AG04450 (cell line): ENCODE measurements at regions of chr2 and their contacts with region 1.

Region 1: DNA sequence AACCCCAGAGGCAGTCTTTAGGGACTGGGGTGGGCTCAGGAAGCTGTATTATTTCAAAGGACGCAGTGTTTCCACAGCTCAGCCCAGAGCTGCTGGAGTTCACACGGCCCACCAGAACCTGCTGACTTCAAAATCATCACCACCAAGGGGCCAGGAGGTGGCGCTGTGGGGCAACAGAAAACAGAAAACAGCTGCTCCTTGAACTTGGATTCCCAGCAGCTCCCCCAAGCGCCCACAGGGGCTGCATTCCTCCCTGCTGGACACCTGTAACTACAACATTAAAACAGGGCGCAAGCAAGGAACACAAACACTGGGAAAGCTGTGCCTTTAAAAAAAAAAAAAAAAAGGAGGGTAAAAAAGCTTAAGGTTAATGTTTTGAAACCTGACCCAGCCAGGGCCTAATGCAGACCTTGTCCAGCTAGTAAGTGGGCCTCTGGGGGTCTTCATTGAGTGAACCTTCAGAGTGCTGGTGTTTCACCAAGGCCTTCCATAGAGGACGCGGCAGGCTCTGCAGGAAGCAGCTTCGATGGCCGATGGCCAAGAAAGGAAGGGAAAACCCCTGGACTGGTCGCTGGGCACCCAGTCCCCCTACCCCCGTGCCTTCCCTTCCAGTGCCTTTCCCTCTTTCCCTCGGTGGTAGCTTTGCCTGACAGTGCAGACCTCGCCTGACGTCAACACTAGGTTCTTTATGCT is 25.9 kb downstream of the MLPH start:
- DNase-seq: peak; percentile 71
- H3K4me3 ChIP-seq: no peak overlapping the region
- H3K27ac ChIP-seq: peak overlapping the region; percentile 31
- H3K27me3 ChIP-seq: no peaks in the 10 kb centered on the region
- CTCF ChIP-seq: peak; percentile 92

Region 2: DNA sequence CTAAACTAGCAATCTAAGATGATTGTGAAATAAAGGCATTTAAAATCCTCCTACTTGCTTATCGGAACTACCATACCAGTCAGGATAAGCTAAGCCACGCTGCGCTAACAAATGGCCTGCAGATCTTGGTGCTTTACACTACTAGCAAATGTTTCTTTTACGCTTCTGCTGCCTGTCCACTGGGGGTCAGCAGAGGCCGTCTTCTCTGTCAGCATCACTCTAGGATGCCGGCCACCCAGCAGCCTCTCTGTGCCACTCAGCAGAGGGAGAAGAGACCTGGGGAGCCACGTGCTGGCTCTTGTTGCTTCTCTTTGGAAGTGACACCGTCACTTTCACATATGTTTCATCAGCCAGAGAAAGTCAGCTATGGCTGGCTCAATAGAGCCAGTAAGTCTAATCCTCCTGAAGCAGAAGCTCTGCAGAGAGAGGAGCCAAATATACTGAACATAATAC is 390.7 kb before region 1 on chr2:
- CTCF ChIA-PET with region 1: interaction called, 30 read pairs
- POLR2A ChIA-PET with region 1: no interaction called
- DNase-seq: peak; percentile 54
- H3K4me3 ChIP-seq: no peak overlapping the region
- H3K27ac ChIP-seq: no peak overlapping the region
- H3K27me3 ChIP-seq: no peaks in the 10 kb centered on the region
- CTCF ChIP-seq: peak; percentile 74

Region 3: GRCh38 chr2:237421542-237422116 is 91.3 kb before region 1 on chr2:
- CTCF ChIA-PET with region 1: interaction called, 20 read pairs
- POLR2A ChIA-PET with region 1: no interaction called
- DNase-seq: peak; percentile 77
- H3K4me3 ChIP-seq: no peak overlapping the region
- H3K27ac ChIP-seq: peak overlapping the region; percentile 61
- H3K27me3 ChIP-seq: no peaks in the 10 kb centered on the region
- CTCF ChIP-seq: peak; percentile 90

Region 4: DNA sequence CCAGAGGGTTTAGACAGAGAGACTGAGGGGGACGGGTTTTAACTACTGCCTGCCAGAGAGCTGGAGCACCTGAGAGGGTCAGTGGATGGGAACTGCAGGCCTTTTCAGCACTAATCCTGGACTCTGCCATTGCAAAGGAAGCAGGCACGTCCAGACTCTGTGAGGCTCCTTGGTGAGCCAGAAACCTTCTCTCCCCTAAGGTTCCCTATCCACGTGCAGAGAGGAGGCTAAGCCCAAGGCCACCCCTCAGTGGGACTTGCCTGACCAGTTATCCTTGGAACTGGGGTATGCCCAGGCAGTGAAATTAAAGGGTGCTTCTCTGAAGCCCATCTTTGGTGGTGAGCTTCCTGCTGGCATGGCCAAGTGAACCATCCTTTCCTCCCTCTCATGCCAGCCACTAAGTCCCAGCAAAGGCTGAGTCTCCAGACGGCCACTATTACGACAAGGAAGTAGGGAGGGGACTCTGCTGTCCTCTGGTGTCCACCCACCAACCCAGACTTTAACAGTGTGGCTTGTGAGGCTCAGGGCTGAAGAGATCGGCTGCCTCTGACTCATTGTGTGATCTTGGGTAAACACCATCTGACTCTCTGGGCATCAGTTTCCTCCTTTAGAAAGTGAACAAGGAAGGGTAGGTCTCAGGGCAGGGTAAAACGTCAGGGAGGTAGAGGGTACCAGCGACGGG is 29.7 kb before region 1 on chr2:
- CTCF ChIA-PET with region 1: interaction called, 18 read pairs
- POLR2A ChIA-PET with region 1: no interaction called
- DNase-seq: peak; percentile 64
- H3K4me3 ChIP-seq: no peak overlapping the region
- H3K27ac ChIP-seq: peak overlapping the region; percentile 71
- H3K27me3 ChIP-seq: no peaks in the 10 kb centered on the region
- CTCF ChIP-seq: peak; percentile 73

Region 5: DNA sequence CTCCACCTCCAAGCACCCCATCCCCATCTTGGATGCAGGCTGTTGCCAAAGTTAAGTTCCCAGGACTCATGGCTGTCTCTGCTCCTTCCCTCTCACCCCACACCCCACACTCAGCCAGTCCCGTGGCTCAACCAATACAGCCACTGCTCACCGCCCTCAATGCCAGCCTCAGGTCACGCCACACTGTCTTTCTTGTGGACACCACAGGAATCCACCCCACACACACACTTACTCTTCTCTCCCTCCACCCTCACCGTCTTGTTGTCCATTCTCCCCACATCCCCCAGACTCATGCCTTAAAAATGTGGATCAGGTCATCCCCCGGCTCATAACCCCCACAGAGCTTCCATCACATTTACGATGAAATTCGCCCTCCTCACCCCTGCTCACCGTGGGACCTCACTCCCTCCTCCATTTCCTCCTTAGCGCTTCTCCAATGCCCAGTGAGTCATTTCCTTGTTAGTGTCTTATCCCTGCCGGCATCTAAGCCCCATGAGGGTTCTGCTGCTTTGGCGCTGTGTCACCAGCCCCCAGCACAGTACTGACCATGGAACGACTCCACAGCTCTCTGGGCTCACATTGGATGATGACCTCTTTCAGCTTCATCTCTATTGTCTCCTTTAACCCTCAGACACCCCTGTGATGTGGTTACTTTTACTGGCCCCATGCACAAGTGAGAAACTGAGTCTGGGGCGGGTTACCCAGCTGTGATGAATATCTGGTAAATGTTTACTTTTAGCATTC is 12.1 kb before region 1 on chr2:
- CTCF ChIA-PET with region 1: interaction called, 67 read pairs
- POLR2A ChIA-PET with region 1: interaction called, 10 read pairs
- DNase-seq: peak; percentile 97
- H3K4me3 ChIP-seq: peak overlapping the region; percentile 18
- H3K27ac ChIP-seq: peak overlapping the region; percentile 96
- H3K27me3 ChIP-seq: no peaks in the 10 kb centered on the region
- CTCF ChIP-seq: no peak

Region 6: GRCh38 chr2:237529452-237530402 is 16.8 kb after region 1 on chr2:
- CTCF ChIA-PET with region 1: interaction called, 39 read pairs
- POLR2A ChIA-PET with region 1: no interaction called
- DNase-seq: no peak
- H3K4me3 ChIP-seq: no peak overlapping the region
- H3K27ac ChIP-seq: no peak overlapping the region
- H3K27me3 ChIP-seq: no peaks in the 10 kb centered on the region
- CTCF ChIP-seq: no peak

Region 7: GRCh38 chr2:237547841-237548416 is 35.0 kb after region 1 on chr2:
- CTCF ChIA-PET with region 1: interaction called, 18 read pairs
- POLR2A ChIA-PET with region 1: no interaction called
- DNase-seq: no peak
- H3K4me3 ChIP-seq: no peak overlapping the region
- H3K27ac ChIP-seq: no peak overlapping the region
- H3K27me3 ChIP-seq: no peaks in the 10 kb centered on the region
- CTCF ChIP-seq: no peak

Region 8: GRCh38 chr2:237657063-237657462 is 144.1 kb after region 1 on chr2:
- CTCF ChIA-PET with region 1: no interaction called
- POLR2A ChIA-PET with region 1: no interaction called
- DNase-seq: no peak
- H3K4me3 ChIP-seq: no peak overlapping the region
- H3K27ac ChIP-seq: no peak overlapping the region
- H3K27me3 ChIP-seq: no peaks in the 10 kb centered on the region
- CTCF ChIP-seq: no peak